BJ (cell line): ENCODE measurements at regions of chr12 and their contacts with region 1.

Region 1: DNA sequence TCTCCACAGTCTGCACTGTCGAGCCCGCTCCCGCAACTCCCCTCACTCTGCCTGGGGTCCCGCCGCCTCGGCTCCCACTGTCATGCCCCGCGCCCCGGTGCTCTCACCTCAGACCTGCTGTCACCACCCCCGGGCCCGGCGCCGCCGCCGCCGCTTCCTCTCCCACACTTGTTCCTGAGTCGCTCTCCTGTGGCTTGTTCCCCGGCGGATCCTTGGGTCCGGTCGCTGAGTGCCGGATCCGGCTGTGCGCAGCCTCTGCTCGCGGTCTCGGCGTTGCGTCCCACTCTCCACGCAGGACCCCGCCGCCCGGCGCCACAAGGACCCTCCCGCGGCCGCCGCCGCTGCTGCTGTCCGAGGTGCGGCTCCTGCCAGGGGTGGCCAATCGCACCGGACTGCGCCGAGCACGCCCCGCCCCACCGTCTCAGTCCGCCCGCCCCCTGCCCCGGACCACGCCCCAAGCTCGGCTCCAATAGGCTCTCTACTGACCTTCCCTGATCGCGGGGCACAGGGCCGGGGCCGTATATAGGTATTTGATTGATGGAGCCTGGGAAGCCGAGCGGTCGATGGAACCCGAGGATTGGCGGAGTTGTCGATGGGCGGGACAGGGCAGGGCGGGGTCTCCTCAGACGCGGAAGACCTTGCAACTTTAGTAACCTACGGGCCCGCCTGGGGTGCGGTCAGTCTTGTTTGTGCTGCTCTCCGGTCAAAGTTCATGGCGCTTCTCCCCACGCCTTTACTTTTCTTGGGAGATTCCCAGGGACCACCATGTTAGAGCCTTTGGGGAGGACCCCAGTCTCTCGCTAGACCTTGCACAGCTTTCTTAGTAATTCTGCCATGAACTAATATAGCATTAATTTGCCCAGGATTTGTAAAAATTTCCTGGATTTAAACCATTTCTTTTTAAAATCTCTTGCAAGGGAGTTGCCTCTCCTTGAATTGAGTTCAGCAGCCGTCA is at the start of gene TAOK3:
- DNase-seq: peak; percentile 84
- H3K4me3 ChIP-seq: peak within 1 kb of the TSS; percentile 93
- H3K27me3 ChIP-seq: no peaks in the 10 kb centered on the region
- CTCF ChIP-seq: no peak
- polyA plus RNA-seq, gene TAOK3: 18.3 and 23.5 TPM in 2 replicates

Region 2: DNA sequence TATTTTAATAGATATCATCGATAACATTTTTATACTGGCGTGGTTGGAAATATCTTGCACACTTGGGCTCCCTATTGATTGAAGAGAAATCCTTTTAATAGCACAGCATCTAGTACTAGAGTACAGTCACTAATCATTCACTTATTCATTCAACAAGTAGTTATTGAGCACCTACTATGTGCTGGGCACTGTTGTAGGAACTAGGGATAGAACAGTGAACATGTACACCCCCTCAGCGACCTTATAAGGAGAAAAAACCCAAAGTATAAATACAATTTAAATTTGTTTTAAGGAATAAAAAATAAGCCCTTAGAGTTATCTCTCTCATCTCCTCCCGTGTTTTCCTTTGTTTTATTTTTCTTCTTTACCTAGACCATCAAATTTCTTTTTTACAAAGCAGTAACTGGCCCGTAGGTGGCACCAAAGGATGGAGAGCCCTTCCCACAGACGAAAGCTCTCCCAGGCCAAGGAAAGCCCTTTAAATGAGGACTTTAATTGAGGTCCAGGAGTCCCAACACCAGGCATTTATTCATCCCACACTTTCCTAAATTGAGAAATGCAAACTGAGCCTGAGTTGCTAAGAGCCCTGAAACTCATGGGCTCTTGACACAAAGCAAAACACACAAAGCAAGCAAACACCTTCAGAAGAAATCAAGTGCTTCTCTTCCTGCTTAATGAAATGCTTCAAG is 207.9 kb before region 1 on chr12:
- CTCF ChIA-PET with region 1: interaction called, 53 read pairs
- POLR2A ChIA-PET with region 1: no interaction called
- DNase-seq: no peak
- H3K4me3 ChIP-seq: no peak overlapping the region
- H3K27me3 ChIP-seq: no peaks in the 10 kb centered on the region
- CTCF ChIP-seq: peak; percentile 64

Region 3: DNA sequence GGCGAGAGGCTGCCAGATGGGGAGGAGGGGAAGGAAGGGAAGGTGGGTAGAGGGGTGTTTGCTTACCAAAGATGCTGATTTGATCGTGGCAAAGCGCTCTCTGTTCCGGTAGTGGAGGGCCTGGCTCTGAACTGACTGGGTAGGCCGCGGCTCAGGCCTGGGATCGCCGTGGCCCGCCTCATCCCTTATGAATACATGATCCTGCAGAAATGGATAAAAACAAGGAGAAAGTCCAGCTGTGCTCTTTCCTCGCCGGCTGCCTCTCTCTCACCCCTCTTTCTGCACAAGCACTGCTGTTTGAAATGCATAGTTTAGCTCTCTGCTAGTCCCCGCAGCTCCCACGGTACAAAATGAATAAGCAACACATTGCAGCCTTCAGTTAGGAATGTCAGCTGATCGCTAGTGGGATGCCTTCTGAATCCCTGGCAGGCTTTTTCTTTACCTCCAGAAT is 183.1 kb before region 1 on chr12:
- CTCF ChIA-PET with region 1: interaction called, 226 read pairs
- POLR2A ChIA-PET with region 1: interaction called, 3 read pairs
- DNase-seq: no peak
- H3K4me3 ChIP-seq: peak overlapping the region; percentile 41
- H3K27me3 ChIP-seq: no peaks in the 10 kb centered on the region
- CTCF ChIP-seq: no peak

Region 4: DNA sequence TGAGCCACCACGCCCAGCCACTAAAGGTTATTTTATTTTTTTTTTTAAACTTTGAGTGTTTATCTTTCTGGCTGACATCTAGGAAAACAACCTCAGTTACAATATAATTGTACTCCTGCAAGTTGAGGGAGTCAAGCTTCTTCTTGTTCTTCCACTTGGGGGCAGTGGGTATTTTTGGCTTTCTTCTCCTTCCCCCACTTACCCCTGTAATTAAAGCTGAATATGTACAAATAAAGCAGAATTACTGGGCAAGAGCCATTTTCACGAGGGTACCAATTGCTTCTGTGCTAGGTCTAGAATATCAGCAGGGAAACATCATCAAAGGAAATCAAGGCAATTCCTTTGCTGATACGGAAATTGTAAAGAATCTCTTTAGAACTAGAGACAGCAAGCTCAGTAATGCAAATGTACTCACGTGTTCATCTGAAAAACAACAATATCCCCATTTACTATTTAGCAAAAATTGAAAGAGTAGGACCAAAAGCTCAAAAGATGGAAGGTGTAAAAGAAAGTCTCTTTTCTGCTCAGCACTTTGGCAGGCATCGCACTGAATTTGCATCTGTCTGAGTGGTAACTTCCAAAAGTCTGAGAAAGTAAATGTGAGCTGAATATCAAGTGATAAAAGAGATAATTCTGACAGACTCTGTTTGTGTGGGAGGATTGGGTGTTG is 72.9 kb before region 1 on chr12:
- CTCF ChIA-PET with region 1: interaction called, 16 read pairs
- POLR2A ChIA-PET with region 1: no interaction called
- DNase-seq: no peak
- H3K4me3 ChIP-seq: no peak overlapping the region
- H3K27me3 ChIP-seq: no peaks in the 10 kb centered on the region
- CTCF ChIP-seq: 0 out of 2 replicates have a peak, but pooled peaks have one; percentile 2

Region 5: DNA sequence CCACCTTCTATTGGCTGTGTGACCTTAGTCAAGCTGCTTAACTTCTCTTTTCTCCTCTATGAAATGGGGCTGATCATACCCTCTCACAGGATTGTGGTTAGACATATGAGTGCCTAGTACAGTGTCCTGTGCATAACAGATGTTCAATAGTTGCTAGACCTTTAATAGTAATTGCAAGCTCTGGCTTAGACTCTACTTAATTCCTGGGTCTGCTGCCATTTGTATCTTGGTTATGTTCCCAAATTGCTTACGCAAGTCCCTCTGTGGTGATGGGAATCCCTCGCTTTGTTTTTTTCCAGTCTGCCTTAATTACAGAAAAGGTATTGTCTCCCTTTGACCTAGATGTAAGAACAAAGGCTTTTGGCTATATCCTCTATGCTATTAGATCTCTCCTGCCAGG is 18.6 kb after region 1 on chr12:
- CTCF ChIA-PET with region 1: interaction called, 45 read pairs
- POLR2A ChIA-PET with region 1: no interaction called
- DNase-seq: no peak
- H3K4me3 ChIP-seq: no peak overlapping the region
- H3K27me3 ChIP-seq: no peaks in the 10 kb centered on the region
- CTCF ChIP-seq: no peak

Region 6: DNA sequence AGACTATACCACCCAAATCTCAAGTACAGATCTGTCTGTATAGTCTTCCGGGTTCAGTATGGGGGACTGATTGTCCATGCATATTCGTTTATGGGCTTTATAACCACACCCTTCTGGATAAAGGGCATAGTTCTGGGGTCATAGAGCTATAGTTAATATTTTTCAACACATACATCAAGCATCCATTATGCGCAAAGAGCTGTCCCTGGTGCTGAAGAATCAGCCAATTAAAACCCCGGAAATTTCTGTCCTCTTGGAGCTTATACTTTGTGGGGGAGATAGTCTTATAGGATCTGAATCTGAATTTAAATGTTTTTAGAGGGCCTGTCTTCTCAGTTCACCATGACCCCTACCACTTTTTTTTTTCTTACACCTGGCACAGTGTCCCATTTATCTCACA is 260.3 kb after region 1 on chr12:
- CTCF ChIA-PET with region 1: no interaction called
- POLR2A ChIA-PET with region 1: no interaction called
- DNase-seq: no peak
- H3K4me3 ChIP-seq: no peak overlapping the region
- H3K27me3 ChIP-seq: no peaks in the 10 kb centered on the region
- CTCF ChIP-seq: no peak